Activated T-helper 1 cell treated with anti-CD3 and anti-CD28 coated beads, Interleukin-12 subunit alpha, Interleukin-12 subunit beta, Interleukin-2, Interleukin-4 antibody, amounts not matched to agents 30 ng/mL and 10 ng/mL and 1 ng/mL, durations not matched to agents 14 hours and 24 hours and 36 hours (primary cell): ENCODE measurements at regions of chr11 and their contacts with region 1.

Region 1: GRCh38 chr11:114348200-114349191 is 51.8 kb downstream of the C11orf71 start:
- DNase-seq: no peak
- H3K4me3 Mint-ChIP-seq: no peak overlapping the region
- H3K27ac Mint-ChIP-seq: no peak overlapping the region
- H3K4me1 Mint-ChIP-seq: no peaks in the 10 kb centered on the region
- H3K27me3 Mint-ChIP-seq: no peaks in the 10 kb centered on the region

Region 2: DNA sequence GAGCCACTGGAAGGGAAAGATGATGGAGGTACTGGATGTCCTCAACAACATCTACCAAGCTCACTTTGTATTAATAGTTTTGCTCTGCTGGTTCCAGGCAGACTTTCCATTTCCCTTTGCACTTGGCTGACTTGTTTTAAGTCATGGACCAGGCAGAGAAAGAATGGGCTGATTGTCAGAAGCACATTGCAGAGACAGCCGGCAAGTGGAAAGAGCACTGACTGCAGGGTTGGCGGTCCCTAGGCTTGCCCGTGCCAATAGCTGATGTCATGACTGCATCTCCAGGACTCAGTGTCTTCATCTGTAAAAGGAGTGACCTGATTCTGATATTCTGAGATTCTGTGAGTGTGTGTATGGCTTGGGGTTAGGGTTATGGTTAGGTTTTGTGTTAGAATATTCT is 73.2 kb before region 1 on chr11:
- intact Hi-C with region 1: no loop called
- DNase-seq: no peak
- H3K4me3 Mint-ChIP-seq: no peak overlapping the region
- H3K27ac Mint-ChIP-seq: no peak overlapping the region
- H3K4me1 Mint-ChIP-seq: no peaks in the 10 kb centered on the region
- H3K27me3 Mint-ChIP-seq: peaks cover 21% of the 10 kb centered on the region

Region 3: DNA sequence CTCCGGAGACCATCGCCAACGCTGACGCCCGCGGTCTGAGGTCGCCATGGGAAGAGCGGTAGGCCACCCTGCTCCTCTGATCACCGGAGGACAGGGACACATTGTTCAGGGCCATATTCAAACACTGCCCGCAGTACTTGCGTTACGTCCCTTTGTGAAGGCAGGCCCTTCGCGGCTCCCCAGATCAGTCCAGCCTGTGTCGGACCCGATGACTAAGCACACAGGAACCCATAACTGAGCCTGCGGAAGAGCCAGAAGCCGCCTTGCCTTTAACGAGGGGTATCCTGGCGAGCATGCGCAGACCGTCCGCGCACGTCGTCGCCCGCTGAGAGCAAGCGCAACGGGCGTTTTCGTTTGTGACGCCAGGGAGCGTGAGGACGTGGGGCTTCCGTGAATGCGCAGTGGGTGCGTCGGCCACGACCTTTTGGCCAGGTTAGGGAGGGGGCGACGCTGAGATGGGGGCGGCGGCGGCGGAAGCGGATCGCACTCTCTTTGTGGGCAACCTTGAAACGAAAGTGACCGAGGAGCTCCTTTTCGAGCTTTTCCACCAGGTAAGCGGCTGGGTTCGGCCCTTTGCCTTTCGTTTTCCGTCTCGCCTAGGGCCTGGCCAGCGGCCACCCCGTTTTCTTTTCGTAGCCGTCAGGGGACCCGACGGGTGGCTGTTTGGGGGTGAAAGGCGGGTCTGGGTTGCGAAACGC is 51.9 kb after region 1 on chr11 and contains the starts of genes C11orf71 and RBM7:
- intact Hi-C with region 1: loop called (anchors 2 kb)
- DNase-seq: peak; percentile 97
- H3K4me3 Mint-ChIP-seq: peak within 1 kb of the TSS; percentile 92
- H3K27ac Mint-ChIP-seq: peak within 1 kb of the TSS; percentile 98
- H3K4me1 Mint-ChIP-seq: peaks cover 51% of the 10 kb centered on the region
- H3K27me3 Mint-ChIP-seq: no peaks in the 10 kb centered on the region
- total RNA-seq, gene C11orf71: 7.7 and 9.3 TPM in 2 replicates
- total RNA-seq, gene RBM7: 34.4 and 38.8 TPM in 2 replicates